Naive thymus-derived CD8-positive, alpha-beta T cell (primary cell): ENCODE measurements at regions of chr4 and their contacts with region 1.

Region 1: DNA sequence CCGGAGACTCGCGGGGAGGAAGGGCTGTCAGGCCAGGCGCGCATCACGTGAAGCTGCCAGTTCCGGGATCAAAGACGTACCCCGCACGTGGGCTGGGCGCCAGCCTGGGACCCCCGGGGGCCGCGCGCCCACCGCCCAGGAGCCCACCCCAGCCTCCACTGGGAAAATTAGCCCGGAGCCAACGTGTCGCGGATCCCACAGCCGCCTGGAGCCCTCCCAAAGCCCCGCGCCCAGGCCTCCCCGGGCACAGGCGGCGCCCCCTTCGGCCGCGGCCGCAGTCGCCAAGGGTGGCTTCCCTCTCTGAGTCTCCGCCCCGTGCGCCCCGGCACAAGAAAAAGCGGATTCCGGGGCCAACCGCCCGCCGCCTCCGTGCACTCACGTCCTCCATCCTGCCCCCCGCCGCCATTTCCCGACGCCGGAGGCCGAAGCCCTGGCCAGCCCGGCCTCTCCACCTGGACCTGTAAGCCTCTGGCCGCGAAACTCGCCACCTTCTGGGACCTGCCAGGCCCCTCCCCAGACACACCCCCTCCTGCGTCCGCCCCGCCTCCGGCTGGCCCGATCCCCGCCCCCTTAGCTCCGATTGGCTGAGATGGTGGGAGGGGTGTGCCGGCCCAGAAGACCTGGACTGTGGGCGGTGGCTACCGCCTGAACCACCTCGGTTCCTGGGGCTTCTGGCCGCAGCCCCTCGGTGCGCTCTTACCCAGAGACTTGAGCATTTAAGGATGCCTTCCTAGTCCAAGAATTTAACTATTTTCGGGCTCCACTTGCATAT is at the start of gene TMEM192:
- DNase-seq: peak; percentile 83 to 98 (median 91)
- ATAC-seq: peak; percentile 93 to 95
- H3K4me3 Mint-ChIP-seq: peak within 1 kb of the TSS; percentile 90 to 98 (median 94)
- H3K27ac Mint-ChIP-seq: peak within 1 kb of the TSS; percentile 89 to 98 (median 94)
- H3K4me1 Mint-ChIP-seq: peaks cover 18 to 43% (median 29%) of the 10 kb centered on the region in 4 donors
- H3K27me3 Mint-ChIP-seq: peaks cover 0 to 4% (median 1%) of the 10 kb centered on the region in 5 donors
- polyA plus RNA-seq, gene TMEM192: 17.2 to 24.9 (median 21.6) TPM

Region 2: GRCh38 chr4:164902608-164903007 is 209.9 kb before region 1 on chr4:
- POLR2A ChIA-PET with region 1: no interaction called
- DNase-seq: no peak
- ATAC-seq: no peak
- H3K4me3 Mint-ChIP-seq: no peak overlapping the region
- H3K27ac Mint-ChIP-seq: no peak overlapping the region
- H3K4me1 Mint-ChIP-seq: no peaks in the 10 kb centered on the region
- H3K27me3 Mint-ChIP-seq: peaks cover 0 to 8% (median 2%) of the 10 kb centered on the region in 5 donors

Region 3: GRCh38 chr4:165327211-165328100 is 214.9 kb after region 1 on chr4 and contains the start of gene MSMO1:
- POLR2A ChIA-PET with region 1: interaction called, 19 read pairs
- DNase-seq: peak; percentile 92 to 99 (median 98)
- ATAC-seq: peak; percentile 97
- H3K4me3 Mint-ChIP-seq: no peak within 1 kb of the TSS
- H3K27ac Mint-ChIP-seq: no peak within 1 kb of the TSS
- H3K4me1 Mint-ChIP-seq: peaks cover 26 to 40% (median 34%) of the 10 kb centered on the region in 4 donors
- H3K27me3 Mint-ChIP-seq: no peaks in the 10 kb centered on the region
- polyA plus RNA-seq, gene MSMO1: 15.9 to 19.0 (median 17.3) TPM